ENCODE measurements at regions of chr1 and their contacts with region 1.

Region 1: GRCh38 chr1:108828022-108828961 is 28.6 kb downstream of the AKNAD1 start:
- DNase-seq: peak; percentile 77
- H3K4me3 ChIP-seq: no peak overlapping the region
- H3K27ac ChIP-seq: peak overlapping the region; percentile 96
- H3K27me3 ChIP-seq: no peaks in the 10 kb centered on the region
- CTCF ChIP-seq: peak; percentile 80

Region 2: GRCh38 chr1:108897865-108898720 is 69.8 kb after region 1 on chr1:
- in situ Hi-C with region 1: loop called (anchors 10 kb)
- DNase-seq: peak; percentile 62
- H3K4me3 ChIP-seq: no peak overlapping the region
- H3K27ac ChIP-seq: no peak overlapping the region
- H3K27me3 ChIP-seq: no peaks in the 10 kb centered on the region
- CTCF ChIP-seq: peak; percentile 57

Region 3: DNA sequence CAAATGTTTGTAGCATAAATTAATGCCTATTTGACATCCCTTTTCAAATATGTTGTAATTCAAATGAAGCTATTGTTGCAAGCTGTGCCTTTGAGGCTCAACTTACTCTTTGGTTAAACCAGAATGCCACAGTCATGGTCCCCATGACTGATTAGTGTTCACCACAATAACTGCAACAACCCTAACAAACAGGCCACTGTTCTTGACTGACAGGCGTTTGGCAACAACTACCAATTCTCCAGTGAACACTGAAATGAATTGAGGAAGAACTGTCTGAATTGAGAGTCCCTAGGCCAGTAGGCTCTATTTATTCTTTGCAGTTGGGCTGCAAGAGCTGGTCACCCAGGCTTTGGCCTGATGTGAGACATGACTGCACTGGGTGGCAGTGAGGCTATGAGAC is 255.6 kb after region 1 on chr1:
- in situ Hi-C with region 1: no loop called
- DNase-seq: no peak
- H3K4me3 ChIP-seq: no peak overlapping the region
- H3K27ac ChIP-seq: no peak overlapping the region
- H3K27me3 ChIP-seq: no peaks in the 10 kb centered on the region
- CTCF ChIP-seq: no peak